ENCODE measurements at regions of chr12 and their contacts with region 1.

Region 1: DNA sequence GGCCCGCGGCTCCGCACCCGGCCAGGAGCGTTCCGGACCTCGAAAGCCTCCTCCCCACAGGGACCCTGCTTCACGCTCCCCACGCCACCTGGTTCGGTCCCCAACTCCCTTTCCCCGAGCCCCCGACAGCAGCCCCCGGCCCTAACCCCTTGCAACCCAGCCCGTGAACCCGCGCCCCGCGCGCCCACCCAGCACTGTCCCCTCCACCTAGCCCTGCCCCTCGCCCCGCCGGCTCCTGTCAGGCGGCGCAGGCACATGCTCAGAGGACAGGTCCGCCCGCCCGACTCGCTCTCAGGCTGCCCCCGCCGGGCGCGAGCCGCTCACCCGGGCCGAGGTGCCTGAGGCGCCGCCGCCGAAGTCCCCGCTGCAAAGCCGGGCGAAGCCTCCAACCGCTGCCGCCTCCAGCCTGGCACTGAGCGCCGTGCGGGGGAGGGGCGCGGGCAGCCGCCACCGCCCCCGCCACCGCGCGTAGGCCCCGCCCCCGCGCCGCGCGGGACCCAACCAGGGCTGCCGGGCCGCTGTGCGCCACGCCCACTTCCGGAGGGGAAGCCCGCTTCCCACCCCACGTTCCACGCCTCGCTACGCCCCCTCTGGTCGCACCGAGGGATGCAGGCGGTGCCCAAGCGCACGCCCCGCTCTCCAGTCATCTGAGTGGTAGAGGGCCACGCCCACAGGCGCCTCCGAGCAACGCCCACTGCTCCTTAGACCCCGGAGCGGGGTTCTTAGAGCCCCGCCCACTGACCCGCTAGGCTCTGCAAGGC is at the start of gene CORO1C:
- DNase-seq: peak; percentile 98 to 99
- ATAC-seq: peak; percentile 84 to 88 (median 85)
- H3K4me3 ChIP-seq: peak within 1 kb of the TSS; percentile 74
- H3K27ac ChIP-seq: peak within 1 kb of the TSS; percentile 99
- H3K4me1 ChIP-seq: peaks cover 40% of the 10 kb centered on the region
- H3K27me3 ChIP-seq: no peaks in the 10 kb centered on the region
- CTCF ChIP-seq: peak; percentile 91
- total RNA-seq, gene CORO1C: 32.4 to 67.1 (median 59.2) TPM

Region 2: GRCh38 chr12:108664338-108665258 is 66.7 kb before region 1 on chr12:
- intact Hi-C with region 1: loop called in 1 of 2 experiments (anchors 2 kb)
- DNase-seq: peak; percentile 75 to 85
- ATAC-seq: peak; percentile 91 to 95 (median 92)
- H3K4me3 ChIP-seq: no peak overlapping the region
- H3K27ac ChIP-seq: peak overlapping the region; percentile 86
- H3K4me1 ChIP-seq: peaks cover 58% of the 10 kb centered on the region
- H3K27me3 ChIP-seq: no peaks in the 10 kb centered on the region
- CTCF ChIP-seq: peak; percentile 94

Region 3: DNA sequence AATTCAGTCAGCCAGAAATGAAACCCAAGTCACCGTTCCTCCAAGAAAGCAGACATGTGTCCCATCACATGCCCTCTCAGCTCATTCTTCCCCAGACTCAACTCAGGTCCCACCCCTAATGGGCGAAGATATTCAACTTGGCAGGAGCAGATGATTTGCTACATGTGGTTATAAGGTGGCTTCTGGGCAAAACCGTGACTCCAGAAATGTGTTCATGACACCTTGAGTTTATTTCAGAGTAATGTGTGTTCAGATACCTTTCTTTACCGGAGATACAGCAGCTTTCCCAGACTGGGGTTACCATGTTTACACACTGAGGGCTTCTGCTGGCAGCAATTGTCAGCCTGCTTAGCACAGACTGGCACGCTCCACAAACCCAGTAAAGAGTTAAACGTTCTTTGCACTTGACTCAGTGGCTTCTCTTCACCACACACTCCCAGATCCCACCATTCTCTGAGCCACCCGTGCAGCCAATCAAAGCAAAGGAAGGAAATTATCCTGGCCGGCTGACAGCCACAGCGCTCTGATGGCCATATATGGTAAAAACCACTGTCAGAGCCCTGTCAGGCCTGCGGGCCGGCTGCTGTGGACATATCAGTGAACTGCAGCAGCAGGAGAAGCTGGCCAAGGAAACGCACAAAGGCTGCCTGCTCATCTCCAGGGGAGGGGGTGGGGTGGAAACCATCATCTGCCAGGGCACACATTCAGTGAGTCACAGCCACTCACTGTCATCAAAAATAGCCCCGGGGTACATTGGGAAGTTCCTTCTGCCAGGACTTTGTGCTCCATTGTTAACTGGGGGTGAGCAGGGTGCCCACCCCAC is 39.9 kb before region 1 on chr12:
- intact Hi-C with region 1: loop called (anchors 2 to 5 kb)
- DNase-seq: peak; percentile 95 to 98
- ATAC-seq: peak; percentile 87 to 94 (median 88)
- H3K4me3 ChIP-seq: peak overlapping the region; percentile 55
- H3K27ac ChIP-seq: peak overlapping the region; percentile 95
- H3K4me1 ChIP-seq: peaks cover 86% of the 10 kb centered on the region
- H3K27me3 ChIP-seq: no peaks in the 10 kb centered on the region
- CTCF ChIP-seq: peak; percentile 44

Region 4: GRCh38 chr12:108788076-108788782 is 56.9 kb after region 1 on chr12:
- intact Hi-C with region 1: loop called (anchors 5 kb)
- DNase-seq: peak in 1 of 2 donors; percentile 75
- ATAC-seq: peak; percentile 14 to 40 (median 16)
- H3K4me3 ChIP-seq: peak overlapping the region; percentile 2
- H3K27ac ChIP-seq: peak overlapping the region; percentile 80
- H3K4me1 ChIP-seq: peaks cover 50% of the 10 kb centered on the region
- H3K27me3 ChIP-seq: no peaks in the 10 kb centered on the region
- CTCF ChIP-seq: no peak

Region 5: DNA sequence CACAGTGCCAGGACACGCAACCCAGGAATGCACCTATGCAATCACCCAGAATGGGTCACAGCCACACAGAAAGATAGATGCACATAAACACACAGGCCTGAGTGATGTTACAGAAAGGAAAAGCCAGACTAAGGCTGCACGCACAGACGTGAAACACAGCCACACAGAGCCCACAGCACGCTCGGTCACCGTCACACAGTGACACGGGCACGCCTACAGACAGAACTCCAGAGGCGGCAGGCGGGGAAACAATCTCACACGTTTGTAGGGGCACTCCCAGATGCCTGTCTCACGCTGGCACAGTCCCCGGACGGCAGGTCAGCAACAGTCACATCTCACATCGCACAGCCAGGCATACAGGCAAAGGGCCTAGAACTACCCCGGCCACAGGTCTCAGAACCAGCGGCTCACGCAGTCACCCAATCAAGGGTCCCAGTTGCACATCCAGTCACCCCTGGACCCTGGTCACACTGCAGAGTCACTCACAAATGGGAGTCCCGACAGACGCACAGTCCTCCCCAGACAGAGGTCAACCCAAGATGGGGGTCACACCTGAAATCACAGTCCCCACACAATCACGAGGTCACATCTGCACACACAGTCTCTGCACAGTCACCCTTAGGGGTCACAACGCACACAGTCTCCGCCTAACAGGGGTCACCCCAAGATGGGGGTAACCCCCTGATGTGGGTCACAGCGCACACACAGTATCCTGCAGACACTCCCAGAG is 125.3 kb after region 1 on chr12:
- intact Hi-C with region 1: loop called in 1 of 2 experiments (anchors 2 kb)
- DNase-seq: peak; percentile 77 to 90
- ATAC-seq: peak; percentile 44 to 62 (median 59)
- H3K4me3 ChIP-seq: peak overlapping the region; percentile 98
- H3K27ac ChIP-seq: peak overlapping the region; percentile 100
- H3K4me1 ChIP-seq: peaks cover 56% of the 10 kb centered on the region
- H3K27me3 ChIP-seq: no peaks in the 10 kb centered on the region
- CTCF ChIP-seq: no peak